Common myeloid progenitor, CD34-positive (primary cell): ENCODE measurements at regions of chr20 and their contacts with region 1.

Region 1: DNA sequence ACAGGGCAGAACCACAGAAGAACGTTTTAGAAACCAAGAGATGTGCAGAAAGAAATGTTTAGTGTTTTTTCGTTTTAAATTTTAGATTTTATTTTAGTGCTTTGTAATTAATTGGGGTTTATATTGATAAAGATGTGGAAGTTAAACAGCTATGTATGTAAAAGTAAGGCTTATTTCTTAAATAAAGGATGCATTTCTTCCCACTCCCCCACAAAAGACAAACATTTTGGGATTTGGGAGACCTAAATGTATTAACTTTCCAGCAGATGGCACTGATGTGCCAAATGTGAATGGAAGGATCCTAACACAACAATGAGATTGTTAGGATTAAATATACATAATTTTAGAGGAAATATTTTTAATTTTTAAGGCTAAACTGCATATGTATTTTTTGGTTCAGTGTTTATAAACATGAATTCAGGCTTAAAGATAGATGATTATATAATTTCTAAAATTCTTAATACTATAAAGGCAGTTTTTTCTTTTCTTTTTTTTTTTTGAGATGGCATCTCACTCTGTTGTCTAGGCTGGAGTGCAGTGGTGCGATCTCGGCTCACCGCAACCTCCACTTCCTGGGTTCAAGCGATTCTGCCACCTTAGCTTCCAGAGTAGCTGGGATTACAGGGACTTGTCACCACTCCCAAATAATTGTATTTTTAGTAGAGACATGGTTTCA is 12.0 kb downstream of the PFDN4 start:
- DNase-seq: peak in 2 of 3 donors; percentile 36 to 46
- H3K4me3 ChIP-seq: no peak overlapping the region
- H3K27ac ChIP-seq: no peak overlapping the region
- H3K4me1 ChIP-seq: peaks cover 0 to 17% (median 6%) of the 10 kb centered on the region in 4 experiments
- H3K27me3 ChIP-seq: no peaks in the 10 kb centered on the region

Region 2: GRCh38 chr20:54231036-54231435 is 11.1 kb after region 1 on chr20:
- CTCF ChIA-PET with region 1: no interaction called
- POLR2A ChIA-PET with region 1: no interaction called
- DNase-seq: no peak
- H3K4me3 ChIP-seq: no peak overlapping the region
- H3K27ac ChIP-seq: no peak overlapping the region
- H3K4me1 ChIP-seq: peaks cover 0 to 6% (median 0%) of the 10 kb centered on the region in 4 experiments
- H3K27me3 ChIP-seq: no peaks in the 10 kb centered on the region

Region 3: DNA sequence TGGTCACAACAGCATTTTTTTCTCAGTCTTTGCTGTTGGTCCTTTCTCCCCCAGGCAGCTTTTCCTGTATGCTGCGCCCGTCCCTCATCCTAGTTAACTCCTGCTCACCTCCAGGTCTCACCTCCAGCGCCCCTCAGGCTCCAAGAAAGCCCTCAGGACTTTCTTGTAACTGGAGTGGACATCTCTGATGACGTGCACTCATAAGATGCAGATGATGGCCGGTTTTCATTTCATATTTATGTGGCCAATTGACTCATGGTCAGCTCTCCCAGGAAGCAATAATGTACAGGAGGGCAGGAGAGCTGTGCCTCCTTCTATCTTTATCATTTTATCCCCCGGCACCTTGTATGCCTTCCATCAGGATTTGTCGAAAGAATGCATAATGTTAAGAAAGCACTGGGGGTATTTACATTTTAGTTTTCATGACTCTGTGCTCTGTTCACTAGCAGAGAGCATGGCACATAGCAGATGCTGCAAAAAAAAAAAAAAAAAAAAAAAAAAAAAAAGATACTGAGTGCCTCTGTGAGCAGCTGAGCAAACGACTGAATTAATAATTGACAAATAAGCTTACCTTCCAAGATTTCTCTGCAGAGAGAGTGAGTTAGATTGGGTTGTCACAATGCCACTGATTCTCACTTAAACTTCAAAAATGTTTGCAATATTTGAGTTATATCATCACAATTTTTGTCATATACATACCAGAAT is 425.7 kb after region 1 on chr20:
- CTCF ChIA-PET with region 1: interaction called, 19 read pairs
- POLR2A ChIA-PET with region 1: no interaction called
- DNase-seq: no peak
- H3K4me3 ChIP-seq: no peak overlapping the region
- H3K27ac ChIP-seq: no peak overlapping the region
- H3K4me1 ChIP-seq: no peaks in the 10 kb centered on the region
- H3K27me3 ChIP-seq: no peaks in the 10 kb centered on the region